Naive thymus-derived CD4-positive, alpha-beta T cell (primary cell): ENCODE measurements at regions of chr4 and their contacts with region 1.

Region 1: DNA sequence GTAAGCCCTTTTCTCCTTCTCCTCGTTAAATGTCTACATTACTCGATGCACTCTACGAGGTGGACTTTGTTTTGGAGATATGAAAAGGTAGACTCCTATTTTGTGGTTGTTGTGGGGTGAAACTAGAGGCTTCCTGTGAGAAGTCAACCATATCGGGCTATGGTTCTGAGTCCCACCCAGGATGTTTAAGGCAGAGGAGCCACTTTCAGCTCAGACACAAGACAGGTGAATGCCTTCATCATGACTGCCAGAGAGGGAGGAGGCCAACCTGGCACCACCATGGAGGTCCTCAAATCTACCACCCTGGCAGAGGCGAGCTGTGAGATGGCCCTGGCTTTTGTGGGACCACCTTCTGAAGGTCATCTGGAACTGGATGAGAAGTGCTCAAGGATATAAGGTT is 154.4 kb upstream of the KLF3 start:
- DNase-seq: peak in 8 of 9 donors; percentile 30 to 83 (median 76)
- ATAC-seq: peak; percentile 94
- H3K4me3 ChIP-seq: peak overlapping the region; percentile 61
- H3K4me3 Mint-ChIP-seq: peak overlapping the region; percentile 70 to 94 (median 89)
- H3K27ac ChIP-seq: peak overlapping the region; percentile 74
- H3K27ac Mint-ChIP-seq: peak overlapping the region; percentile 71 to 97 (median 89)
- H3K4me1 ChIP-seq: peaks cover 60 to 64% of the 10 kb centered on the region in 2 donors
- H3K4me1 Mint-ChIP-seq: peaks cover 40 to 94% (median 90%) of the 10 kb centered on the region in 7 donors
- H3K27me3 ChIP-seq: no peaks in the 10 kb centered on the region
- H3K27me3 Mint-ChIP-seq: peaks cover 0 to 51% (median 0%) of the 10 kb centered on the region in 5 donors

Region 2: GRCh38 chr4:38310446-38311043 is 199.0 kb before region 1 on chr4:
- CTCF ChIA-PET with region 1: no interaction called
- POLR2A ChIA-PET with region 1: no interaction called
- intact Hi-C with region 1: loop called in 1 of 2 experiments (anchors 5 kb)
- DNase-seq: peak in 8 of 9 donors; percentile 70 to 84 (median 79)
- ATAC-seq: peak; percentile 96
- H3K4me3 ChIP-seq: peak overlapping the region; percentile 12
- H3K4me3 Mint-ChIP-seq: peak overlapping the region; percentile 37 to 80 (median 70)
- H3K27ac ChIP-seq: peak overlapping the region; percentile 44
- H3K27ac Mint-ChIP-seq: peak overlapping the region; percentile 65 to 96 (median 85)
- H3K4me1 ChIP-seq: peaks cover 29 to 34% of the 10 kb centered on the region in 2 donors
- H3K4me1 Mint-ChIP-seq: peaks cover 24 to 70% (median 60%) of the 10 kb centered on the region in 7 donors
- H3K27me3 ChIP-seq: no peaks in the 10 kb centered on the region
- H3K27me3 Mint-ChIP-seq: peaks cover 0 to 45% (median 0%) of the 10 kb centered on the region in 5 donors

Region 3: DNA sequence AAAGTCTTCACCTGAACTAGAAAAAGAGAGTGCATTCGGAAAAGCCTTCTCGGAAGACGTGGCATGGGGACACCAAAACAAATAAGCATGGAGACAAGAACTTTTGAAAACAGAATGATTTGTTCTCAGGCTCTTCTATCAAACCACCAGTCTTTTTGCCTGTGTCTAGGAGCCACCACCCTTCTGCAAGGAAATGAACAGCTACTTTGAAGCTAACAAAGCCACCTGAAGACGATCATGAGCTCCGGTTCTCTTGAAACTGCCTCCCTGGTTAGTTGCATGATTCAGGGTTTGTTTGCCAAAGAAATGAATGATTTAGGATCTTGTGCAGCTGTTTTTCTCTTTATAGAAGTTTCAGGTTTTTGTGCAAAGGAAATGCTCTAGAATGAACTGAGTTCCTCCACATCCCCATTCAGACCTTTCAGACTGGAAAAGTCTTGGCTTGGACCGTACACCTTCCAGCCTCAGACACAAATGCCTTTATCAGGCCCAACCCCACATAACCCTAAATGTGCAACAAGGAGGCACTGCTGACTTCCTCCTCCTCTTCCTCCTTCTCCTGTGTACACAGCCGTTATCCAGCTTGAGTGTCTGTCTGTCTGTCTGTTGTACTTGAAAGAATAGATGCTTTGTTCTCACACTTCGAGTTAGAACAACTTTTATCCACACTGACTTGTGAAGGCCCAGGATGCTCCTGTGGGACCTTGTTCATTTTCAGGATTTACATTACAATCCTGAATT is 180.4 kb before region 1 on chr4:
- CTCF ChIA-PET with region 1: interaction called, 3 read pairs
- POLR2A ChIA-PET with region 1: interaction called, 12 read pairs
- intact Hi-C with region 1: loop called in 1 of 2 experiments (anchors 1 kb)
- DNase-seq: peak in 7 of 9 donors; percentile 57 to 87 (median 77)
- ATAC-seq: peak; percentile 87
- H3K4me3 ChIP-seq: no peak overlapping the region
- H3K4me3 Mint-ChIP-seq: peak overlapping the region; percentile 14 to 83 (median 73)
- H3K27ac ChIP-seq: peak overlapping the region; percentile 68
- H3K27ac Mint-ChIP-seq: peak overlapping the region; percentile 43 to 98 (median 92)
- H3K4me1 ChIP-seq: peaks cover 0 to 69% of the 10 kb centered on the region in 2 donors
- H3K4me1 Mint-ChIP-seq: peaks cover 30 to 95% (median 74%) of the 10 kb centered on the region in 7 donors
- H3K27me3 ChIP-seq: no peaks in the 10 kb centered on the region
- H3K27me3 Mint-ChIP-seq: peaks cover 0 to 31% (median 0%) of the 10 kb centered on the region in 5 donors

Region 4: DNA sequence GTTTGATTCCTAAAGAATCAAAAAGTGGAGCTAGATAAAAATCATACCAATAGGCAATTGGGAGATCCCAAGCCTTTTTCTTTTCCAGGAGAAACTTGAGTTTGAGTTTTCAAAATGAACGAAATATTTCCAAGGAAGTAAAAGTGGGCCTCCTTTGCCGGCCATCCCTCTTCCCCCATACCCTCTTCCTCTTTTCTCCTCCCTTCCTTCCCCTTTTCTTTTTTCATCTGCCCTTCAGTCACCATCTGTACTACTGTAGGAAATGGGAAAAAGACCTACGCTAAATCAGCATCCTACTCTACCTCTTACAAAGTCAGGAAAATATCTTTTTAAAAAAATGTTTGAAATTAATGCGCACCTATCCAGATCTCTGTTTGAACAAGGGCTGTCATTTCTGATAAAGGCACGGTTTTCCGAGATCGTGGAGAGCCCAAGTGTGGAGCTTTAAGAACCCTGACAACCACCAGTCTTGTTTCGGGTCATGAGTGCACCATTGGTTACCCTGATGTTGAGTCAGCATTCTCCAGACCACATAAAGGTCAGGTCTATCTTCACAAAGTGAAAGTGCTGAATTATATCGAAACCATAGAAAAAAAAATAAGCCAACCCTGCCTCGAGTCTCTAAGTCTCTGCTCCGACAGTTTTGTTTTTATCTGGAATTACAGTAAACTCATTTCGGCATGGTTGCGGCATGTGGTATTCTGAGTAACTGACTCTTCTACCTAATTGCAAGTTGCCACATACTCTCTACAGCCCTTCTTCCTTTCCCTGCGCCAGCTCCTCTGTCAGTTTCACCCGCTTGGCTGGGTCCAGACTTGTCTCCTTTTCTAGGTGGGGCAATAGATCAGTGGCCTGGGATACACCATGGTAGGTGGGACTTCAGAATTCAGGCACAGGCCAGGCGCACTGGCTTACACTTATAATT is 14.2 kb after region 1 on chr4:
- CTCF ChIA-PET with region 1: interaction called, 4 read pairs
- POLR2A ChIA-PET with region 1: interaction called, 6 read pairs
- intact Hi-C with region 1: loop called in 1 of 2 experiments (anchors 1 kb)
- DNase-seq: peak in 1 of 9 donors; percentile 38
- ATAC-seq: peak; percentile 84
- H3K4me3 ChIP-seq: no peak overlapping the region
- H3K4me3 Mint-ChIP-seq: peak overlapping the region in 3 of 10 donors; percentile 20 to 49 (median 38)
- H3K27ac ChIP-seq: no peak overlapping the region
- H3K27ac Mint-ChIP-seq: peak overlapping the region in 4 of 9 donors; percentile 7 to 65 (median 14)
- H3K4me1 ChIP-seq: peaks cover under 1 to 2% of the 10 kb centered on the region in 2 donors
- H3K4me1 Mint-ChIP-seq: peaks cover 22 to 51% (median 33%) of the 10 kb centered on the region in 7 donors
- H3K27me3 ChIP-seq: no peaks in the 10 kb centered on the region
- H3K27me3 Mint-ChIP-seq: peaks cover 0 to 44% (median 0%) of the 10 kb centered on the region in 5 donors

Region 5: GRCh38 chr4:38654273-38654672 is 144.7 kb after region 1 on chr4:
- CTCF ChIA-PET with region 1: no interaction called
- POLR2A ChIA-PET with region 1: interaction called, 44 read pairs
- intact Hi-C with region 1: loop called in 1 of 2 experiments (anchors 2 kb)
- DNase-seq: peak in 7 of 9 donors; percentile 67 to 88 (median 79)
- ATAC-seq: peak; percentile 86
- H3K4me3 ChIP-seq: peak overlapping the region; percentile 45
- H3K4me3 Mint-ChIP-seq: peak overlapping the region; percentile 64 to 94 (median 82)
- H3K27ac ChIP-seq: peak overlapping the region; percentile 92
- H3K27ac Mint-ChIP-seq: peak overlapping the region; percentile 80 to 100 (median 99)
- H3K4me1 ChIP-seq: peaks cover 24 to 43% of the 10 kb centered on the region in 2 donors
- H3K4me1 Mint-ChIP-seq: peaks cover 37 to 70% (median 65%) of the 10 kb centered on the region in 7 donors
- H3K27me3 ChIP-seq: no peaks in the 10 kb centered on the region
- H3K27me3 Mint-ChIP-seq: peaks cover 0 to 46% (median 0%) of the 10 kb centered on the region in 5 donors